SK-N-SH (cell line): ENCODE measurements at regions of chr9 and their contacts with region 1.

Region 1: DNA sequence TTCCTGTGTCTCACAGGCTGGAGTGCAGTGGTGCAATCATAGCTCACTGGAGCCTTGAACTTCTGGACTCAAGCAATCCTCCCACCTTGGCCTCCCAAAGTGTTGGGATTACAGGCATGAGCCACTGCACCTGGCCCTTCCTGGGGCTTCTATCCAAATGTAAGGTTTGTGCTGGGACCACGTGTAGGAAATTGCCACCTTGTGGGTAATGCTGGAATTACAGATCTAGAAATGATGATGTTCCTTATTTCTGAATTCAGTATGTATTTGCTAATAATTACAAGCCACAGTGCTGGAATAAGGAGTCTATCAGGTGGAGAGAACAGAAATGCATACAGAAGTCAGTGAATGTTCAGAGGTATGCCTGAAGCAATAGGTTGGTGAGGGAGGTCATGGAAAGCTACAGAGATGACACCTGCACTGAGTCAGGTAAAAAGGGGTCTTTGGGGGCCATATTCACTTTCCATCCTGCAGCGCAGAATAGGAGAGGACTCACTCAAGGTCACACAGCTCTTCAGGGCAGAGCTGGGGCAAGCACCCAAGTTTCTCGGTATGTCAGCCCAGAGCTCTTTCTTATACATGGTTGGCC is 8.8 kb upstream of the IGFBPL1 start:
- DNase-seq: peak; percentile 47
- H3K4me3 ChIP-seq: no peak overlapping the region
- H3K27ac ChIP-seq: no peak overlapping the region
- H3K4me1 ChIP-seq: no peaks in the 10 kb centered on the region
- H3K27me3 ChIP-seq: peaks cover 9% of the 10 kb centered on the region; the same call in 1 of the 2 replicates
- CTCF ChIP-seq: peak; percentile 69
- EP300 ChIP-seq: no peak
- RAD21 ChIP-seq: peak; percentile 71

Region 2: DNA sequence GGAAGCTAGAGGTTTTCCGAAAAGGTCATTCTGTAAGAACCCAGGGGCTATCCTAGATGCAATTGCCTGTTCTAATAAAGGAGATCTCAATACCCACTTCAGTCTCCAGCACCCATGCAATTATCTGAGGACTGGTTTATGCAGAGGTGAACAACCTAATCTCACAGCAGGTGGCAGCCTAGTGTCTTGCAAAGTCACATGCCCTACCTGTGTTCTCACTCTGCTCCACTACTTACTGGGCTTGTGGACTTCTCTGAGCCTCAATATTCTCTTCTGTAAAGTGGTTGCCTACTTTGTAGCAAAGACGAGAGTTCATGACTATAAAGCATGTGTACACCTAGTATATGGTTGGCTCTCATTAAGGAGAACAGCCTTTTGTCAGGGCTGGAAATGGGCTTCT is 61.5 kb before region 1 on chr9:
- CTCF ChIA-PET with region 1: interaction called, 29 read pairs
- POLR2A ChIA-PET with region 1: no interaction called
- DNase-seq: no peak
- H3K4me3 ChIP-seq: no peak overlapping the region
- H3K27ac ChIP-seq: peak overlapping the region in 1 of 2 experiments; percentile 97; a peak in 2 of 4 replicates
- H3K4me1 ChIP-seq: peaks cover 0 to 31% of the 10 kb centered on the region in 2 experiments; a peak in 2 of 4 replicates
- H3K27me3 ChIP-seq: peaks cover 14% of the 10 kb centered on the region; the same call in 1 of the 2 replicates
- CTCF ChIP-seq: peak; percentile 14; the same call in 1 of the 2 replicates
- EP300 ChIP-seq: no peak
- RAD21 ChIP-seq: peak; percentile 74

Region 3: GRCh38 chr9:38443181-38443580 is 10.2 kb after region 1 on chr9:
- CTCF ChIA-PET with region 1: interaction called, 22 read pairs
- POLR2A ChIA-PET with region 1: no interaction called
- DNase-seq: no peak
- H3K4me3 ChIP-seq: no peak overlapping the region
- H3K27ac ChIP-seq: no peak overlapping the region
- H3K4me1 ChIP-seq: no peaks in the 10 kb centered on the region
- H3K27me3 ChIP-seq: no peaks in the 10 kb centered on the region
- CTCF ChIP-seq: no peak
- EP300 ChIP-seq: no peak
- RAD21 ChIP-seq: no peak